ENCODE measurements at regions of chr1 and their contacts with region 1.

Region 1: DNA sequence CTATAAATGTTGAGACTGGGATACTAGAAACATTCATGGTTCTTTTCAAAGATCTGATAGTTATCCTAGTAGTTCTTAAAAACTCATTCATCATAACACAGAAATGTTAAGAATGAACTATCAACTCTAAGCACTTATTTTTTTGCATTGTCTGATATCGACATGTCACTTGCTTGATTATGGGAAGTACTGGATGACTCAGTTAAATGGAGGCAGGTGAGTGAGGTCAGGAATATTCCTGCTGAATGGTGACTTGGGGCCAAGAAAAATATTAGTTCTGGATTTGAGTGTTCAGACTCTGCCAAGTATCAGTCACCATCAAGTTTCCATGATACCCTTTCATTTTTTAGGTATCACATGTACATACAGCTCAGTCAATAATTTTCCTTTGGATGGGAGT is 63.6 kb downstream of the NEK7 start:
- DNase-seq: peak; percentile 36
- ATAC-seq: peak; percentile 63
- H3K4me3 ChIP-seq: no peak overlapping the region
- H3K27ac ChIP-seq: no peak overlapping the region
- H3K4me1 ChIP-seq: no peaks in the 10 kb centered on the region
- H3K27me3 ChIP-seq: no peaks in the 10 kb centered on the region
- CTCF ChIP-seq: no peak

Region 2: GRCh38 chr1:197958438-197959300 is 261.8 kb before region 1 on chr1:
- CTCF ChIA-PET with region 1: no interaction called
- POLR2A ChIA-PET with region 1: no interaction called
- in situ Hi-C with region 1: no loop called
- intact Hi-C with region 1: no loop called
- DNase-seq: no peak
- ATAC-seq: no peak
- H3K4me3 ChIP-seq: no peak overlapping the region
- H3K27ac ChIP-seq: no peak overlapping the region
- H3K4me1 ChIP-seq: no peaks in the 10 kb centered on the region
- H3K27me3 ChIP-seq: no peaks in the 10 kb centered on the region; the same call in 1 of the 2 replicates
- CTCF ChIP-seq: no peak

Region 3: DNA sequence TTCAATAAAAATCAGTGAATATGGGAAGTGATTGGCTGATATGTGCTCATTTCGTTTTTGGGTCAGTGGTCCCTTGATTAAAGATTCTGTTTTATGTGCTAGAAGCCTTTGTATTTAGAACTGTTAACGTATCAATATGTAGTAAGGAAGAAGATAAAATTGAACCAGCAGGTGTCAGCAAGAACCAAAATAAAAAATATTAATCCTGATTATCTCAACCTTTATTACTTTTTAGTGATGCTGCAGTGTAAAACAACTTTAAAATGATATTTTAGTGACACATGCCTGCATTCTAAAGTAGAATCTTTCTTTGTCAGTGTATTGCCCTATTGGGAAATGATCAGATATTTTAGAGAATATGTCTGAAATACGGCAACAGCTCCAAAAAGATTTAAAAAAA is 14.1 kb before region 1 on chr1:
- CTCF ChIA-PET with region 1: no interaction called
- POLR2A ChIA-PET with region 1: no interaction called
- in situ Hi-C with region 1: no loop called
- intact Hi-C with region 1: loop called (anchors 1 kb)
- DNase-seq: no peak
- ATAC-seq: no peak
- H3K4me3 ChIP-seq: no peak overlapping the region
- H3K27ac ChIP-seq: no peak overlapping the region
- H3K4me1 ChIP-seq: no peaks in the 10 kb centered on the region
- H3K27me3 ChIP-seq: no peaks in the 10 kb centered on the region
- CTCF ChIP-seq: no peak

Region 4: DNA sequence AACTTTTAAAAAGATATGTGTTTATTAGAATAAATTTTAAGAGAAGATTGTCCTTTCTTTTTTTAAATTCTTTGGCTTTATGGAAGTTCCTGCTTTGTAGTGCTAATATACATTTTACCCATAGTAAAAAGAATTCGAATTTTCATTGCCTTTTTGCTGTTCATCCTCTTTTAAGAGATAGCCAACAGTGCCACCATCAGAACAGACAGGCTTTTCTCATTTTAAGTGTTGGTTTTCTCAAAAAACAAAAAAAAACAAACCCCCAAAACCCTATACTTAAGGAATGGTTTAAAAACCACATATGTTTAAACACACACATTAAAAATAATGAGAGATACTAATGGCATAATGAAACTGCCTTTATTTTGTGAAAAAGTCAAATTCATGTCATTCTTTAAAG is 55.2 kb after region 1 on chr1:
- CTCF ChIA-PET with region 1: no interaction called
- POLR2A ChIA-PET with region 1: no interaction called
- in situ Hi-C with region 1: no loop called
- intact Hi-C with region 1: no loop called
- DNase-seq: no peak
- ATAC-seq: no peak
- H3K4me3 ChIP-seq: no peak overlapping the region
- H3K27ac ChIP-seq: no peak overlapping the region
- H3K4me1 ChIP-seq: no peaks in the 10 kb centered on the region
- H3K27me3 ChIP-seq: no peaks in the 10 kb centered on the region
- CTCF ChIP-seq: no peak; the same call in 1 of the 2 replicates